Activated B cell treated with CpG ODN at 0.5 μM for 24 hours (primary cell): ENCODE measurements at regions of chr7 and their contacts with region 1.

Region 1: DNA sequence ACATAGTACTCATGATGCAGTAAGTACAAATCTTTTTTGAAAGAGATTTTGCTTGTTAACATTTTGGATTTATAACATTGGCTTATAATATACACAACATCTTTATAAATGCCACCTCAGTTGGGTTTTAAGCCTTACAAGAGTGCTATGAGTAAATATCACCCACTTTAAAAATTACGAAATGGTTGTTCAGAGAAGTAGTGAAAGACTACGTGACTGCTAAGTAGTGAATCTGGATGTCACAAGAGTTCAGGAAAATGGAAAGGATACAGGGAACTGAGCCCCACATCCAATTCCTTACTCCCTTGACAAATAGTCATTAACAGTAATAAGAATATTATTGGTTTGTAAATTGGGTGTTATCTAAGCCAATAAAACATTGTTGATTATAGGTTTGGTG is 20.0 kb downstream of the TMEM106B start:
- DNase-seq: no peak
- ATAC-seq: no peak
- H3K4me3 Mint-ChIP-seq: no peak overlapping the region
- H3K27ac Mint-ChIP-seq: no peak overlapping the region
- H3K4me1 Mint-ChIP-seq: peaks cover 11% of the 10 kb centered on the region
- H3K27me3 Mint-ChIP-seq: no peaks in the 10 kb centered on the region
- CTCF ChIP-seq: no peak

Region 2: GRCh38 chr7:11957956-11958355 is 273.1 kb before region 1 on chr7:
- CTCF ChIA-PET with region 1: no interaction called
- POLR2A ChIA-PET with region 1: no interaction called
- intact Hi-C with region 1: no loop called
- DNase-seq: no peak
- ATAC-seq: no peak
- H3K4me3 Mint-ChIP-seq: no peak overlapping the region
- H3K27ac Mint-ChIP-seq: no peak overlapping the region
- H3K4me1 Mint-ChIP-seq: no peaks in the 10 kb centered on the region
- H3K27me3 Mint-ChIP-seq: no peaks in the 10 kb centered on the region
- CTCF ChIP-seq: no peak

Region 3: DNA sequence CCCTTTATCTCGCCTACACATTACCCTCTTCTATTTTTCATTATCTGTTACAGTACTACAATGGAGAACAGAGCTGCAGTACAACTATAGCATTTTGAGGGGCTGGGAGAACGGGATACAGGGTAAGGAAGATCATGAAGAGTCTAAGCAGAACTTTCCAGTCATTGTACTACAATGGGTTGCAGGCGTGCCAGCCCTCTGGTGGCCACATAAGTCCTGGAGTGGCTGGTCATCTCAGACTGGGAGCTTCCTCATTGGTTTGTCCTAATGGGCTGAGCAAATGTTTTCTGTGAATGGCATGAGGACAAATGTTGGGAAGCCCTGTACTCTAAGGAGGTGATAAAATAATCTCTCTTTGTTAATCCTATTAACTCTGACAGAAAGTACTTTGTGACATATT is 13.0 kb after region 1 on chr7:
- CTCF ChIA-PET with region 1: no interaction called
- POLR2A ChIA-PET with region 1: no interaction called
- intact Hi-C with region 1: loop called (anchors 2 kb)
- DNase-seq: no peak
- ATAC-seq: no peak
- H3K4me3 Mint-ChIP-seq: no peak overlapping the region
- H3K27ac Mint-ChIP-seq: no peak overlapping the region
- H3K4me1 Mint-ChIP-seq: peaks cover 21% of the 10 kb centered on the region
- H3K27me3 Mint-ChIP-seq: peaks cover 6% of the 10 kb centered on the region
- CTCF ChIP-seq: no peak